Endothelial cell of umbilical vein (primary cell): ENCODE measurements at regions of chr4 and their contacts with region 1.

Region 1: DNA sequence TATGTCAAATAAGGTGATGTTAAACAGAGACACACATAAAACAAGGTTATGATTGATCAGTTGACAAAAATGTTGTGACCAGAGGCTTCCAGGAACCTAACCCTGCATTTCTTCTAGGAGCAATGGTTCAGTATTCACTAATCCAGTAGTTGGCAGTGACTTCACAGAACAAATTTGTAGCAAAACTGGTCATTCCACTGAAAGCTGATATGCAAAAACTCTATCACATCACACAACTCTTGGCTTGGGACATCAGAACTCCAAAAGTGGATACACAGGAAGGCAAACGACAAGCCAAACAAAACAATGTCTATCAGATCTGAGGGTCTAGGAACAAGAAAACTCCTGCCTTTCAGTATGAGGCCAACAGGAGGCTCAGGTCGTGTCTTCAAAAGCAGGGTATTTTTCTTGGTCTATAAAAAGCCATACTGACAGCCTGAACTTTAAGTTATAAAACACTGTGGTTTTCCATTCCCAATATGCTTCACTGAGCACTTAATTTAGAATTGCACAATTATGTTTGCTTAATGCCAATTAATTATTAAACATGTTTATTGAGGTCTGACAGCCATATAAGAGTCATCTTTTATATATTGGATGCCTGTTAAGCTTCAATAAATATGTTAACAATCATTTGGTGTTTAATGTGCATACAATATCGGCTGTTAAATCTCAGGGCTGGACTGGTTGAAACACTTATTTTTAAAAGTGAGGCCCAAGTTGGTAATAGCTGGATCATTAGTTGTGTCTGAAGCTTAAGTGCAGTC is 45.6 kb downstream of the SOD3 start:
- DNase-seq: no peak
- H3K4me3 ChIP-seq: no peak overlapping the region
- H3K27ac ChIP-seq: no peak overlapping the region
- H3K4me1 ChIP-seq: peaks cover 15% of the 10 kb centered on the region
- H3K27me3 ChIP-seq: no peaks in the 10 kb centered on the region
- CTCF ChIP-seq: no peak
- POLR2A ChIP-seq: no peak

Region 2: DNA sequence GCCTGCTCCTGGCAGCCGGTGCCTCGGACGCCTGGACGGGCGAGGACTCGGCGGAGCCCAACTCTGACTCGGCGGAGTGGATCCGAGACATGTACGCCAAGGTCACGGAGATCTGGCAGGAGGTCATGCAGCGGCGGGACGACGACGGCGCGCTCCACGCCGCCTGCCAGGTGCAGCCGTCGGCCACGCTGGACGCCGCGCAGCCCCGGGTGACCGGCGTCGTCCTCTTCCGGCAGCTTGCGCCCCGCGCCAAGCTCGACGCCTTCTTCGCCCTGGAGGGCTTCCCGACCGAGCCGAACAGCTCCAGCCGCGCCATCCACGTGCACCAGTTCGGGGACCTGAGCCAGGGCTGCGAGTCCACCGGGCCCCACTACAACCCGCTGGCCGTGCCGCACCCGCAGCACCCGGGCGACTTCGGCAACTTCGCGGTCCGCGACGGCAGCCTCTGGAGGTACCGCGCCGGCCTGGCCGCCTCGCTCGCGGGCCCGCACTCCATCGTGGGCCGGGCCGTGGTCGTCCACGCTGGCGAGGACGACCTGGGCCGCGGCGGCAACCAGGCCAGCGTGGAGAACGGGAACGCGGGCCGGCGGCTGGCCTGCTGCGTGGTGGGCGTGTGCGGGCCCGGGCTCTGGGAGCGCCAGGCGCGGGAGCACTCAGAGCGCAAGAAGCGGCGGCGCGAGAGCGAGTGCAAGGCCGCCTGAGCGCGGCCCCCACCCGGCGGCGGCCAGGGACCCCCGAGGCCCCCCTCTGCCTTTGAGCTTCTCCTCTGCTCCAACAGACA is 41.3 kb before region 1 on chr4:
- CTCF ChIA-PET with region 1: no interaction called
- POLR2A ChIA-PET with region 1: no interaction called
- dilution Hi-C with region 1: no loop called
- intact Hi-C with region 1: loop called (anchors 1 kb)
- DNase-seq: no peak
- H3K4me3 ChIP-seq: no peak overlapping the region
- H3K27ac ChIP-seq: no peak overlapping the region
- H3K4me1 ChIP-seq: no peaks in the 10 kb centered on the region
- H3K27me3 ChIP-seq: peaks cover 56 to 59% of the 10 kb centered on the region in 2 experiments
- CTCF ChIP-seq: no peak
- POLR2A ChIP-seq: no peak